ENCODE measurements at regions of chr15 and their contacts with region 1.

Region 1: GRCh38 chr15:88624156-88624970 is 3.2 kb downstream of the AEN start:
- DNase-seq: peak; percentile 83 to 86 (median 84)
- H3K4me3 ChIP-seq: peak overlapping the region in 1 of 7 experiments; percentile 19
- H3K27ac ChIP-seq: peak overlapping the region in 1 of 2 experiments; percentile 61
- H3K4me1 ChIP-seq: peaks cover 6 to 41% (median 32%) of the 10 kb centered on the region in 4 experiments
- H3K27me3 ChIP-seq: no peaks in the 10 kb centered on the region

Region 2: GRCh38 chr15:88393719-88394519 is 230.4 kb before region 1 on chr15:
- CTCF ChIA-PET with region 1: no interaction called
- POLR2A ChIA-PET with region 1: no interaction called
- DNase-seq: no peak
- H3K4me3 ChIP-seq: no peak overlapping the region
- H3K27ac ChIP-seq: no peak overlapping the region
- H3K4me1 ChIP-seq: peaks cover 0 to 12% (median 8%) of the 10 kb centered on the region in 4 experiments
- H3K27me3 ChIP-seq: peaks cover 0 to 5% (median 2%) of the 10 kb centered on the region in 5 experiments

Region 3: DNA sequence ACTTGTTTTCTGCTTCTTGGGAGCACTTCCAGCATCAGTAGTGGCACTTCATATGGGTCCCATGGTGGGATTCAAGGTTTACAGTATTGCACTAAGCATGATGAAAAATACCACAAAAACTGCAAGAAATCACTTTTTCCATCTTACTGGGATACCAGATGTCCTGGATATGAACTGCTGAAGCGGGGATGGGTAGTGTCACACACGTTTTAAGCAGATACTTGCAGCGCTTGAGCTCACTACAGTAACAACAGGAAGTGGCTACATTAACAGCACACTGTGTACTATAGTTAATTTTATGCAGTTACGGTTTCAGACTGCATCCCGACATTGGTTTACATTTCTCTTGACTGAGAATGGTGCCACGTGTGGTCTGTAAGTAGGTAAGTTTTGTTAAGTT is 11.0 kb after region 1 on chr15:
- CTCF ChIA-PET with region 1: interaction called, 22 read pairs
- POLR2A ChIA-PET with region 1: interaction called, 8 read pairs
- DNase-seq: peak in 2 of 3 donors; percentile 53 to 68
- H3K4me3 ChIP-seq: peak overlapping the region in 1 of 7 experiments; percentile 40
- H3K27ac ChIP-seq: no peak overlapping the region
- H3K4me1 ChIP-seq: peaks cover 21 to 49% (median 34%) of the 10 kb centered on the region in 4 experiments
- H3K27me3 ChIP-seq: no peaks in the 10 kb centered on the region

Region 4: GRCh38 chr15:88657326-88658069 is 33.1 kb after region 1 on chr15:
- CTCF ChIA-PET with region 1: interaction called, 21 read pairs
- POLR2A ChIA-PET with region 1: no interaction called
- DNase-seq: peak in 2 of 3 donors; percentile 47 to 53
- H3K4me3 ChIP-seq: no peak overlapping the region
- H3K27ac ChIP-seq: no peak overlapping the region
- H3K4me1 ChIP-seq: peaks cover 0 to 7% (median 3%) of the 10 kb centered on the region in 4 experiments
- H3K27me3 ChIP-seq: no peaks in the 10 kb centered on the region

Region 5: GRCh38 chr15:88664151-88664778 is 39.9 kb after region 1 on chr15:
- CTCF ChIA-PET with region 1: interaction called, 36 read pairs
- POLR2A ChIA-PET with region 1: no interaction called
- DNase-seq: peak; percentile 54 to 73 (median 63)
- H3K4me3 ChIP-seq: no peak overlapping the region
- H3K27ac ChIP-seq: no peak overlapping the region
- H3K4me1 ChIP-seq: no peaks in the 10 kb centered on the region
- H3K27me3 ChIP-seq: no peaks in the 10 kb centered on the region

Region 6: GRCh38 chr15:88704791-88705768 is 80.7 kb after region 1 on chr15:
- CTCF ChIA-PET with region 1: no interaction called
- POLR2A ChIA-PET with region 1: no interaction called
- DNase-seq: peak; percentile 15 to 48 (median 16)
- H3K4me3 ChIP-seq: peak overlapping the region in 6 of 7 experiments; percentile 42 to 88 (median 68)
- H3K27ac ChIP-seq: no peak overlapping the region
- H3K4me1 ChIP-seq: peaks cover 0 to 12% (median 3%) of the 10 kb centered on the region in 4 experiments
- H3K27me3 ChIP-seq: peaks cover 2 to 20% (median 11%) of the 10 kb centered on the region in 5 experiments

Region 7: GRCh38 chr15:88744548-88745020 is 120.2 kb after region 1 on chr15:
- CTCF ChIA-PET with region 1: no interaction called
- POLR2A ChIA-PET with region 1: no interaction called
- DNase-seq: no peak
- H3K4me3 ChIP-seq: no peak overlapping the region
- H3K27ac ChIP-seq: no peak overlapping the region
- H3K4me1 ChIP-seq: no peaks in the 10 kb centered on the region
- H3K27me3 ChIP-seq: peaks cover 0 to 29% (median 3%) of the 10 kb centered on the region in 5 experiments

Region 8: DNA sequence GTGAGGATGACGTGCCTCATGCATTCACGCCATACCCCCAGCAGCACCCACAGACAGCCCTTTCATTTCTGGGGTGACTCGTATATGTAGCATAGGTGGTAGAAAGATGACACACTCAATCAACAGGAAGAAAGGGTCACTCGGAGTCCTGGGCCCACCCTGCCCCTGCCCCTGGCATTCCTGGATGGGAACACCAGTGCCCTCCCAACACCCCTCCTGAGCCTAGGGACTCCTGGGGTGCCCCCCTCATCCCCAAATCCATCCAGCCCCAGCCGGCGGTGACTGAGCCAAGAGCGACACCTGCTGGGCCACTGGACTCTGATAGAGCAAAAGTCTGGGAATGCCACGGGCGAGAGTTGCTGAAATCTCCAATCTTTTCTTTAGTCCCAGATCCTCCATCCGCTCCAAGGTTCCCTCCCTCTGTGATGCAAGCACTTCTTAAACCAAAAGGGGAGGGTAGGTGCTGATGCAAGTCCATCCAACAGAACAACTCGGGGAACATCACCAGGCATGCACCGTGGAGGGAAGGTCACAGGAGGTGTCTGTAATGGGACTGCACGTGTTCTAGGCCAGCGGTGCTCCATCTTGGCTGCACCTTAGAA is 209.9 kb after region 1 on chr15:
- CTCF ChIA-PET with region 1: interaction called, 15 read pairs
- POLR2A ChIA-PET with region 1: no interaction called
- DNase-seq: peak; percentile 14 to 22 (median 19)
- H3K4me3 ChIP-seq: no peak overlapping the region
- H3K27ac ChIP-seq: no peak overlapping the region
- H3K4me1 ChIP-seq: no peaks in the 10 kb centered on the region
- H3K27me3 ChIP-seq: peaks cover 0 to 4% (median 0%) of the 10 kb centered on the region in 5 experiments